Activated CD4-positive, alpha-beta T cell treated with anti-CD3 and anti-CD28 coated beads, Interleukin-2, amount 10 ng/mL, durations not matched to agents 24 days and 14 days (primary cell): ENCODE measurements at regions of chr10 and their contacts with region 1.

Region 1: DNA sequence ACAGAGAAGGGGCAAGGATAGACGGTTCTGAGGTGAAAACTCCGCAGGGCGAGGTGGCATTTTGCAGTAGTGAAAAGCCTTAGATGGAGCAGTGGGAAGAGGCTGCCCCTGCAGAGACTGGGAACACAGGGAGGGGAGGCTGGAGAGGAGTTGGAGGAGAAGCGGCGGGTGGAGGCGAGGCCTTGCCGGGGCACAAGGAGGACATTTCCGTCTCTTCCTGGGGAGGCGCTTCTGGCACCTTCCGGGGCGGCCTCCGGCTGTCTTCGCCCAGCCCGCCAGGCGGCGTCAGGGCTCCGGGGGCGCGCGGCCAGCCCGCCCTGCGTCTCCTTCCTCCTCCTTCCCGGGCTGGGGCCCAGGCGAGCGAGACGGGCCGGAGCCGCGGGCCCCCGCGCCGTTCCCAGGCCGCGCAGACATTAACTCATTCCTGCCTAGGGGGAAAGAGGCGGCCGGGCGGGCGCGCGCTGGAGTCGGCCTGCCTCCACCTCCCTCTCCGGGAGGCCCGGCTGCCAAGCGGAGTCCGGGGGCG is 42.7 kb downstream of the LDB3 start:
- DNase-seq: peak; percentile 96
- H3K4me3 Mint-ChIP-seq: peak overlapping the region; percentile 94
- H3K27ac Mint-ChIP-seq: peak overlapping the region; percentile 97
- H3K4me1 Mint-ChIP-seq: peaks cover 13% of the 10 kb centered on the region
- H3K27me3 Mint-ChIP-seq: no peaks in the 10 kb centered on the region

Region 2: GRCh38 chr10:86399879-86400704 is 311.0 kb before region 1 on chr10:
- intact Hi-C with region 1: loop called (anchors 2 kb)
- DNase-seq: peak; percentile 98
- H3K4me3 Mint-ChIP-seq: peak overlapping the region; percentile 89
- H3K27ac Mint-ChIP-seq: peak overlapping the region; percentile 95
- H3K4me1 Mint-ChIP-seq: peaks cover 22% of the 10 kb centered on the region
- H3K27me3 Mint-ChIP-seq: peaks cover 6% of the 10 kb centered on the region

Region 3: DNA sequence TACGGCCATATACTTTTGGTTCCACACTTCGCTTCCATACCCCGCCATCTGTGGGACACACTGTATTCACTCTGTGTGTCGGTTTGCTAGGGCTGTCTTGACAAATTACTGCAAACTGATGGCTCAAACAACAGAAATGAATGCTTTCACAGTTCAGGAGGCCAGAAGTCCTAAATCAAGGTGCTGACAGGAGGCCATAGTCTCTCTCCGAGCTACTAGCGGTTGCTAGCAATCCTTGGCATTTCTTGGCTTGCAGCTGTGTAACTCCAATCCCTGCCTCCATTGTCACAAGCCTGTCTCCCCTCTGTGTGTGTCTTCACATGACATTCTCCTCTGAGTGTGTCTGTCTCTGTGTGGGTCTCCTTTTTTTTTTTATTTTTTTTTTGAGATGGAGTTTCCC is 16.4 kb after region 1 on chr10:
- intact Hi-C with region 1: no loop called
- DNase-seq: no peak
- H3K4me3 Mint-ChIP-seq: no peak overlapping the region
- H3K27ac Mint-ChIP-seq: no peak overlapping the region
- H3K4me1 Mint-ChIP-seq: peaks cover 7% of the 10 kb centered on the region
- H3K27me3 Mint-ChIP-seq: peaks cover 17% of the 10 kb centered on the region

Region 4: GRCh38 chr10:86899670-86900276 is 188.7 kb after region 1 on chr10:
- intact Hi-C with region 1: loop called (anchors 2 kb)
- DNase-seq: peak; percentile 81
- H3K4me3 Mint-ChIP-seq: no peak overlapping the region
- H3K27ac Mint-ChIP-seq: no peak overlapping the region
- H3K4me1 Mint-ChIP-seq: no peaks in the 10 kb centered on the region
- H3K27me3 Mint-ChIP-seq: peaks cover 3% of the 10 kb centered on the region

Region 5: DNA sequence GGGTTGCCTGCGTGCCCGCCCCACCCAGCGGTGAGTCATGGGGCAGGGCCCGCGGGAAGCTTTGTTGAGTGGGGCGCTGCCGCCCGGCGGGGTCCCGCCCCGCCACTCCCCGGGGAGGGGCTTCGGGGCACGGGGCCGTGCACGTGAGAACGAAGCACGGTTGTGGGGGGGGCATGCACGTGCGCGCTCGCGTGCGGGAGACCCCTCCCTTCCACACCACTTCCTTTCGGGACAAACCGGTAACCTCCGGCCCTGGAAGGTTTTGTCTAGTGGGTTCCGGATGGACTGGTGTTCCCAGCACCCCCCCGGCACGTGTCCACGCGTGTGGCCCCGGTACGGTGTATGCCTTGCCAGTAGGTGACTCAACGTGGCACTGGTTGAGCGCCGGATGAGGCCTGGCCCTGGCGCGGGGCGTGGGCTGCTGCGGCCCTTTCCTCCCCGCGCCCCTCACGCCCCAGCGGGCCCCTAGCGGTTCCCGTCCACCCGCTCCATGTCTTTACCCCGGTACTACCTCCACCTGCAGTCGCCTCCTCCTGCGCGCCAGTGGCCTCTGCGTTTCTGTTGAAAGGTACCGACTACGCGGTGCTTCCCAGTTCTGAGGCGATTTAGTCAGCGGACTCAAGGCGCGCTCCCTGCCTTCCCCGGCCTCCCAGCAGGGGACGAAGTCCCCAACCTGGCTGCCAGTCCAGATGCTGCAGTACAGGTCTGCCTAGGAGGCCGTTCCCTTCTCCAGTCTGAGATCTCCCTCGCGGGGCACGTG is 260.4 kb after region 1 on chr10:
- intact Hi-C with region 1: loop called (anchors 1 kb)
- DNase-seq: peak; percentile 95
- H3K4me3 Mint-ChIP-seq: peak overlapping the region; percentile 83
- H3K27ac Mint-ChIP-seq: peak overlapping the region; percentile 89
- H3K4me1 Mint-ChIP-seq: peaks cover 13% of the 10 kb centered on the region
- H3K27me3 Mint-ChIP-seq: peaks cover 35% of the 10 kb centered on the region

Region 6: GRCh38 chr10:87817609-87818504 is 1106.8 kb after region 1 on chr10 and contains the start of gene ATAD1:
- intact Hi-C with region 1: loop called (anchors 10 kb)
- DNase-seq: peak; percentile 97
- H3K4me3 Mint-ChIP-seq: peak within 1 kb of the TSS; percentile 90
- H3K27ac Mint-ChIP-seq: peak within 1 kb of the TSS; percentile 98
- H3K4me1 Mint-ChIP-seq: peaks cover 27% of the 10 kb centered on the region
- H3K27me3 Mint-ChIP-seq: peaks cover 2% of the 10 kb centered on the region
- total RNA-seq, gene ATAD1: 54.1 and 55.5 TPM in 2 replicates